ENCODE measurements at regions of chr3 and their contacts with region 1.

Region 1: DNA sequence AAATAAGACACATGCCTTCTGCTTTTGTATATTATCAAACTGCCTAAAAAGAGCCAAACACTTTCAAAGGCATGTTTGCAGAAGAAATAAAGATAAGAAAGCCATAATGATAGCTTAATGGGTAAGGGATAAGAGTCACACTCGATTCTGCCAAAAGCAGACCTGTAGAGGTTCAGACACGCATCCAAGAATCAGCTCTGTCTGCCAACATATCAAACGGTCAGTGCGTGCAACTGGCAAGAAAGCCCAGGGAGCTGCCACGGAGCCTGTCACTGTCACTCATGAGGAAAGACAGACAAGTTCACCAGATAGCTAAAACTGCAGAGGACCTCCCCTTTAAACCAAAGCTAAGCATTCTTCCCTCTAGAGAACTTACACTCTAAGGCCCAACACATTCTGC is 23.2 kb downstream of the DCP1A start:
- DNase-seq: no peak

Region 2: DNA sequence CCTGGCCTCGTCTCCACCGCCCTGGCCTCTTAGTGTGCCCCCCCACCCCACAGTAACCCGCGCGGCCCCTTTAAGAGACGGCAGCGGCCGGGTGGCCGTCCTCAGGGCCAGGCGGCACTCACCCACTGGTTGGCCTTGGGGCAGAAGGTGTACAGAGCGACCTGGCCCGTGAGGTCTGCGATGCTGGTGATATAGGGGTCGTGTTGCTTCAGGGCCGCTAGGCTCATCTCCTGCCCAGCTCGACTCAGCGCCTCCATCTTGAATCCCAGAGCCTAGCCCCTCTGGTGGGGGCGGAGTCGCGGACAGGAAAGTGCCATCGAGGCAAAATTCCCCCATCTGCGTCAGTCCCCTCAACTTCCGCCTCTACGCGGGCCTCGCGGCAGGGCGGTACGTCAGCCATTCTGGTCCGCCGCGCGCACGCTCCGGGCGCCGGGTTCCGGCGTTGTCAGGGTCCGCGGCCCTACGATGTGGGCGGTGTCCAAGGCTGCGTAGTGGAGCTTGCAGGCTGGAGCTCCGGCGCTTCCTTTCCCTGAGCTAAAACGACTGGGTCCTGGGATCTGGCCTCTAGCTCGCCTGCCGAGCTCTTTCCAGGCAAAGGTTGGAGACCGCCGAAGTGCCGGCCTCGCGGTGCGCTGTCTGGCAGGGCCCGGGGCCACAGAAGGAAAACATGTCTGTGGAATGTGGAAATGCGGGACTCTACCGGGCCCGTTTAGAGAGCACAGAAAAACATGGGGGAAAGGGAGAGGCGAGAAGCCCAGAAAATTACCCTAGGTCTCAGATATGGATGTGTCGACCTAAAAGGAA is 23.4 kb after region 1 on chr3 and contains the start of gene DCP1A:
- CTCF ChIA-PET with region 1: interaction called, 3 read pairs
- POLR2A ChIA-PET with region 1: interaction called, 12 read pairs
- DNase-seq: peak; percentile 93